AG04450 (cell line): ENCODE measurements at regions of chr2 and their contacts with region 1.

Region 1: DNA sequence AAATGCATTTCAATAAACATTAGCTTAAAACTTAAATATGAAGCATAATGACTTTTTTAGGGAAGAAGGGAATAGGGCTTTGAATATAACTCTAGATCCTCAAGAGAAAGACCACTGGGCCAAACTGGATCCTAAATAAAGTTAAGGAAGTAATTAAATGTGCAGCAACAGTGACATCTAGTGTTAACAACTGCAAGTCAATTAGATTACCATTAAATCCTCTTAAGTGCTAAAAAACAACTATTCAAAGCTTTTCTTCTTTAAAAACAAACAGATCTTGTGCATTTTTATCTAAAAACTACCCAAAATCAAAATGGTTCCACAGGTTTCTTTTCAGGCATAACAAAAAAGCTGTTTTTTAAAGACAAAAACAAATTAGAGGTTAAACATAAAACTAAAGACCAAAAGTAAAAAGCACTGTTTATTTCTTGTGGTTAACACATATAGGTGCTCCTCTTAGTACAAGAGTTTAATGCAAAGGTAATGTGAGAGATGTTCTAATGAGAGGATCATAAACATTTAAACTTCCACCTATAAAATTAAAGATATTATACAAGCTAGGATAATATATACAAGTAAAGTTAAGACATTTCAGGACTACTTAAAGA is 111.4 kb downstream of the THADA start:
- DNase-seq: peak; percentile 61
- H3K4me3 ChIP-seq: no peak overlapping the region
- H3K27ac ChIP-seq: no peak overlapping the region
- H3K27me3 ChIP-seq: no peaks in the 10 kb centered on the region
- CTCF ChIP-seq: peak; percentile 51

Region 2: DNA sequence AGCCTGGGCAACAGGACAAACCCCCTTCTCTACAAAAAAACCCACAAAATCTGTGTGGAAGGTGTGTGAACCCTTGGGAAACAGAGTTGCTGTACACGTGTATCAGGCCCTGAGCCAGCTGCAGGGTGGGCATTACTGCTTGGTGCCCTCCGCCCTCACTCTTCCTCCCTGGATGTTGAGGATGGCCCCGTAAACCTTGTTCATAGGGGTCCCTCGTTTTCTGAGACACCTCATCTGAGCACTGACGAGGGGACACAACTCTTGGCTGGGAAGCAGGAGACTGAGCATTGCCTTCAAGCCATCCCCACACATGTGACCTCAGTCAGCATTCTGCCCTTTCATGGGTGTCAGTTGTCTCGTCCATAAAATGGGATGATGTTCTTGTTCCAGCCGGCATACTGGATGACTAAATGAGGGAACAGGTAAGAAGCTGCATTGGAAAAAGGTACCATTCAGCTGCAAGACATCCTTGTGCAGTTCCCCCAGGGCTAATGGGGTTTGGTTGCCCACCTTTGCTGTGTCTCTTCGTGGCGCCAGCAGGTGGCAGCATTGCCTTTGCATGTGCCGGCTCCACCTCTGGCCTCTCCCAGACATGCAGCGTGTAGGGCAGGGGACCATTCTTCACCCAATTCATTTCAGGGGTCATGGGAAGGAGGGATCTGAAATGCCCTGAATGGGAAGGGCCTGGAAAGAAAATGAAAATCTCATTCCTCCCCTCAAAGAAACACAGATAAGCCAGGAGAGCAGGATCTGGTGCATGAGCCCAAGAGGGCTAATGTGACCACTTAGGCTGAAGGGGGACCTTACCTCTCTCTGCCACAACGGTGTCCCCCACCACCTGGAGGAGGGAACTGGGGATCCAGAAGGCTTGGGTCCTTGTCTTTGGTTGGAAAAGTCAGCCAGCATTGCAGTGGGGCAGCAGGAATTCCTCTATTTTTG is 655.7 kb before region 1 on chr2:
- CTCF ChIA-PET with region 1: interaction called, 49 read pairs
- POLR2A ChIA-PET with region 1: no interaction called
- DNase-seq: no peak
- H3K4me3 ChIP-seq: no peak overlapping the region
- H3K27ac ChIP-seq: no peak overlapping the region
- H3K27me3 ChIP-seq: no peaks in the 10 kb centered on the region
- CTCF ChIP-seq: peak; percentile 87

Region 3: DNA sequence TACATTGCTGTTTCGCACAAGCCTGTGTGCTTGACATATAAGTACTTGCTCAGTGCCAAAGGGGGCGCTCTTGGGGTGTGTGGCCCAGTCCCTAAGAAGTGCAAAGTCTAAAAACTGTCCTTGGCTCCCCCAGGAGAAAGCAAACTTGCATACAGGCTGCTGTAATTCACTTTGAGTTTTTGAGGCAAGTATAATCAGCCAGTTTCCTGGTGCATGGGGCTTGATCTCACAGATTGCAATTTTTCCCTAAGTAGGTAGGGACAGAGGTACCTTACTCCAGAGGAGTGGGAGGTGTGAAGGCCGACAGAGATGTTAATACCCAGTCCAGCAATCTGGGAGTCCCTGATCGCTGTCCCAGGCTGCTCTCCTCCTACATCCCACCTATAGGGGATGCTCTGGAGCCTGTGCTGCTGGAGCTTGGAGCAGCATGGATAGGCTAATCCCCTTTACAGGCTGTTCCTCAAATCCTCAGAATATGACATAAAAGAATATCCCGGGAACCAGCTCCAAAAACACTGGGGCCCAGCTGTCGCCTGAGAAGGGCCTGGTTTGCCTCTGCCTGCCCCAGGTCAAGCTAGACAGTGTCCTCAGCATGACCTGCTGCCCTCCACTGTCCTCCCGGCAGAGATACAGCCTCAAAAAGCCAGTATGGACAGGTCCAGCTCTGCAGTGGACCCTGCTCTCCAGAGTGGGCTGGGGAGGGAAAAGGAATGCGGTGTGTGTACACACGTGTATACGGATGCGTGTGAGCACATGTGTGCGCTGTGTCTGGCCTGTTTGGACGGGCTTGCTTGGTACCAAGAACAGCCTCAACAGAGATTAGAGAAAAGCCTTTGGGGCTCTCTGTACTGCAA is 555.5 kb before region 1 on chr2:
- CTCF ChIA-PET with region 1: interaction called, 12 read pairs
- POLR2A ChIA-PET with region 1: no interaction called
- DNase-seq: no peak
- H3K4me3 ChIP-seq: no peak overlapping the region
- H3K27ac ChIP-seq: peak overlapping the region; percentile 80
- H3K27me3 ChIP-seq: no peaks in the 10 kb centered on the region
- CTCF ChIP-seq: peak; percentile 58

Region 4: GRCh38 chr2:42964439-42965083 is 519.9 kb before region 1 on chr2:
- CTCF ChIA-PET with region 1: interaction called, 12 read pairs
- POLR2A ChIA-PET with region 1: no interaction called
- DNase-seq: peak; percentile 90
- H3K4me3 ChIP-seq: no peak overlapping the region
- H3K27ac ChIP-seq: peak overlapping the region; percentile 90
- H3K27me3 ChIP-seq: no peaks in the 10 kb centered on the region
- CTCF ChIP-seq: no peak

Region 5: GRCh38 chr2:43219383-43220228 is 264.8 kb before region 1 on chr2:
- CTCF ChIA-PET with region 1: interaction called, 27 read pairs
- POLR2A ChIA-PET with region 1: no interaction called
- DNase-seq: no peak
- H3K4me3 ChIP-seq: peak overlapping the region; percentile 87
- H3K27ac ChIP-seq: peak overlapping the region; percentile 96
- H3K27me3 ChIP-seq: no peaks in the 10 kb centered on the region
- CTCF ChIP-seq: no peak

Region 6: DNA sequence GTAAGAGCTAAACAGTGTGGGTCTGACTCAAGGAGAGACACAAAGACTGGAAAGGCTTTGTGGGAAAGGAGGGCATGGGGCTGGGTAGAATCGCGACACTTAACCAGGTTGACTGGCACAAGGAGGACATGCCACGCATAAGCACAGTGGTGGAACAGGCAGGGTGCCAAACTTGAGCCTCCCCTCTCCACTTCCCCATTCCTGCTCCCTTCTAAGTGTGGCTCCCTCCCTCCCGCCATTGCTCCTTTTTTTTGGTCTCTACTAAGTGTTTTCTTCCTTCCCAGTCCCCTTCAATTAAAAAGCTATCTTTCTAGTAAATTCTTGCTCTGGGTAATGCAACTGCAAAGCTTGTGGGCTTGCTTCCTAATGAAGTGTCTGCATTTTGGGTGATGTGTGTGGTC is 217.7 kb before region 1 on chr2:
- CTCF ChIA-PET with region 1: interaction called, 11 read pairs
- POLR2A ChIA-PET with region 1: no interaction called
- DNase-seq: no peak
- H3K4me3 ChIP-seq: no peak overlapping the region
- H3K27ac ChIP-seq: no peak overlapping the region
- H3K27me3 ChIP-seq: no peaks in the 10 kb centered on the region
- CTCF ChIP-seq: no peak

Region 7: GRCh38 chr2:43472527-43473194 is 11.8 kb before region 1 on chr2:
- CTCF ChIA-PET with region 1: interaction called, 19 read pairs
- POLR2A ChIA-PET with region 1: no interaction called
- DNase-seq: no peak
- H3K4me3 ChIP-seq: no peak overlapping the region
- H3K27ac ChIP-seq: no peak overlapping the region
- H3K27me3 ChIP-seq: no peaks in the 10 kb centered on the region
- CTCF ChIP-seq: no peak

Region 8: DNA sequence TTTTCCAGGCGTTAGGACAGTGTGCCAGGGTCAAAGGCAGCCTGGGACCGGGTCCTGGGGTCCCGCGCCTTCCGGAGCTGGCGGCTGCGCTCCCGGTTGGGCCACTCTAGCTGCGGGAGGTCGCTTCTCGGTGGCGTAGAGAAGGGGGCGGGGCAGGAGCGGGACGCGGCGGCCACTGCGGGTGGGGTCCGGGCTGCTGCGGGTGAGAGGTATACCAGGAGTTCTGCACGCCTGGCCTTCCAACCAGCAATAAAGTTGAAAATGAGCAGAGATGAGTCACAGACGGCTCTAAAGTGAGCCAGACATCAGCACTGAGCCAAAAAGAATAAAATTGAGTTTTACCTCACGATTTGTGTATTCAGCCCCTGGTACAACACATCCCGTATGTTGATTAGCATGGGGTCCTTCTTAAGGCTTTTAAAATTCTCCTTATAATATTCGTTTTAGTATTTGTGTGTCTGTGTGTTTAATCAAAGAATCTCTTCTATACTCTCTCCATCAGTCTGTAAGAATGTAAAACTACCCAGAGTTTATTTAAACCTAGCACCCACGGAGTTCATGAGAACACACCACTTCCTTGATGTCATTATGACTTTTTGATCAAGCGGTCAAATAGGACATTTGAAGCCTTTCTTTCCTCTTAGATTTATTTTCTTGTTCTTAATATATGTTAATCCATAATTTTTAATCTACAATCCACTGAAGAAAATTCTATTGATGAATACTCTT is 192.1 kb after region 1 on chr2 and contains the start of gene C1GALT1C1L:
- CTCF ChIA-PET with region 1: no interaction called
- POLR2A ChIA-PET with region 1: no interaction called
- DNase-seq: no peak
- H3K4me3 ChIP-seq: peak within 1 kb of the TSS; percentile 60
- H3K27ac ChIP-seq: no peak within 1 kb of the TSS
- H3K27me3 ChIP-seq: no peaks in the 10 kb centered on the region
- CTCF ChIP-seq: no peak
- polyA plus RNA-seq, gene C1GALT1C1L: 0.51 and 0.77 TPM in 2 replicates